ENCODE measurements at regions of chr9 and their contacts with region 1.

Region 1: DNA sequence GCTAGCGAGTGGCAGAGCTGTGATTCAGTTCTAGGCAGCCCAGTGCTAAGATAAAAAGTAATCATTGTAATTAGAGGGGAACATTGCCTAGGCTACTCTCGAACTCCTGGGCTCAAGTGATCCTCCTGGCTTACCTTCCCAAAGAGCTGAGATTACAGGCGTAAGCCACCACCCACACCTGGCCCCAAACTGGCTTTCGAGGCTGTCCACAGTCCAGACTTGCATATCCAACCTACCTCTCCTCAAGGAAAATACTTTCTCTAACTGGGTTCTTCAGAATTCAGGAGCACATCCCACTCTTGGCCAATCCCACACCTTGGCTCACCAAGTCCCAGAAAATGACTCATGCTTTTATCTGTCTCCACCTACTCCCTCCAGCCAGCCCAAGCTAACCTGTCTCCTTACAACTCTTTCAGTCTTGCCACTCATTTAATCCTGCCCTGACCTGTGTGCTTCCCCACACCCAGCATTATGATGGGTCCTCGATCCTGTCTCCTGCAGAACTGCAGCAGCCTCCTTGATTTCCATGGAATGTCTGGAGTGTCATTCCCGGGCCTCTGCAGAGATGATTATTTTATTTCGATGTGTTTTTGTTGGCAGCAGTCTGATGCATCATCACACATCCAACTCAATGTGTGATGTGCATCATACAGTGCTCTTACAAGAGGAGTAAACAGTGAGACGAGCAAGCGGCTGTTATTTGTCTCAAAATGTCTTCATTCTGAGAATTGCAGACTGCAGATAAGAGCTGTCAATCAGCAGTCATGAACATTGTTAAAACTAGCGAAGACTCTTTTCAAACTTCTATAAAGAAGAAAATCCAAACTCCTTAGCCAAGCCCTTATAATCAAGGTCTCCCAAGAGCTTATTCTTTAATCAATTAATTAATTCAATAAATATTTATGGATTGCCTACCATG is 167.3 kb downstream of the SEC61B start:
- DNase-seq: no peak
- ATAC-seq: no peak

Region 2: GRCh38 chr9:99345942-99346341 is 43.4 kb before region 1 on chr9:
- intact Hi-C with region 1: loop called (anchors 1 kb)
- DNase-seq: no peak
- ATAC-seq: no peak